GM10248 (cell line): ENCODE measurements at regions of chr5 and their contacts with region 1.

Region 1: DNA sequence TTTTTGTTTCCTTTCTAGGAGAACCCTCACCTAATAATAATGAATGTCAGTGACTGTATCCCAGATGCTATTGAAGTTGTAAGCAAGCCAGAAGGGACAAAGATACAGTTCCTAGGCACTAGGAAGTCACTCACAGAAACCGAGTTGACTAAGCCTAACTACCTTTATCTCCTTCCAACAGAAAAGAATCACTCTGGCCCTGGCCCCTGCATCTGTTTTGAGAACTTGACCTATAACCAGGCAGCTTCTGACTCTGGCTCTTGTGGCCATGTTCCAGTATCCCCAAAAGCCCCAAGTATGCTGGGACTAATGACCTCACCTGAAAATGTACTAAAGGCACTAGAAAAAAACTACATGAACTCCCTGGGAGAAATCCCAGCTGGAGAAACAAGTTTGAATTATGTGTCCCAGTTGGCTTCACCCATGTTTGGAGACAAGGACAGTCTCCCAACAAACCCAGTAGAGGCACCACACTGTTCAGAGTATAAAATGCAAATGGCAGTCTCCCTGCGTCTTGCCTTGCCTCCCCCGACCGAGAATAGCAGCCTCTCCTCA is 87.1 kb downstream of the OSMR start:
- DNase-seq: no peak
- CTCF ChIP-seq: no peak

Region 2: DNA sequence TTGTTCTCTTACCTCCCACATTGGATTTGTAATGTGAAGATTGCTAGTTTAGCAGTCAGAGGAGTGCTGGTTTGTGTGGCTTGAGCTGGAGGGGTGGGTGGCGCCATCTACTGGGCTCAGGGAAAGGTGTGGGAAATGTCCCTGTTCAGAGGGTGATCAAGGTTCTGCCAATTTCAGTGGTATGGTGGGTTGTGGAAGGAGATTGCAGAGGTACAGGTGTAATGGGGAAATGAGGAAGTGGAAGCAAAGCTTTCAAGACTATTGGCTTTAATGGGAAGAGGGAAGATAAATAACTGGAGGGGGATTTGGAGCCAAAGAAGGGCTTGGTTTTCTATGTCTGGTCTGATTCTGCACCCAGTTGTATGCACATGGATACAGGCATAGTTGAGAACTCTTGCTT is 10.7 kb before region 1 on chr5:
- CTCF ChIA-PET with region 1: interaction called, 20 read pairs
- POLR2A ChIA-PET with region 1: no interaction called
- DNase-seq: peak; percentile 67
- CTCF ChIP-seq: peak; percentile 71

Region 3: DNA sequence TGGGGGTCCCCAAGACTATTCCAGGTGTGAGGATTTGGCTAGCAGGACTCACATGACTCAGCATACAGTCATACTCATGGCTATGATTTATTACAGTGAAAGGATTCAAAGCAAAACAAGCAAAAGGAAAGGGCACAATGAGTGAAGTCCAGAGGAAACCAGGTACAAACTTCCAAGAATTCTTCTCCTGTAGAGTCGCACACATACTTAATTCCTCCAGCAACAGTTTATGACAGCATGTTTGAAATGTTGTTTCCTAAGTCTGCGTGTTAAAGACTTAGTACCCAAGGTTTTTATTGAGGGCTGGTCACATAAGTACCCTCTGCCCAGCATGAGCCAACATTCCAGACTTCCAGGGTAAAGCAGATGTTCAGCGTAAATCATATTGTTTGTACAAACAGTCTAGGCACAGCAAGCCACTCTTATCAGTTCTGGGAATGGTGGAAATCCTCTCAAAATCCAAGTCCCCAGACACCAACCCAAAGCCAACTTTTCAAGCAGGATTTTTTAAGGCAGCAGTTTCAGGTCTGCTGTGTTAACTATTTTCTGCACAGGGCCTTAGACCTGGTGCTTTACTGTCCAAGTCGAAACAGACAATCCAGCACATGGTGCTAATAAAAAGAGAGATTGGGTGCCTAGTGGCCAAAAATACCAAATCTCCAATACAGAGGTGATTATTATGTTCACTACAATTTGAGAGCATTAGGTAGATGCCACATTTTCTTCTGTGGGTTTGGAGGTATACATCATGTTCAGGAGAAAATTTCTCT is 159.8 kb after region 1 on chr5:
- CTCF ChIA-PET with region 1: no interaction called
- POLR2A ChIA-PET with region 1: no interaction called
- DNase-seq: no peak
- CTCF ChIP-seq: no peak